ENCODE measurements at regions of chr3 and their contacts with region 1.

Region 1: GRCh38 chr3:44661189-44661588 is 12.7 kb downstream of the ZNF35 start:
- DNase-seq: no peak
- H3K4me3 ChIP-seq: no peak overlapping the region
- H3K27ac ChIP-seq: no peak overlapping the region
- H3K4me1 ChIP-seq: no peaks in the 10 kb centered on the region
- H3K27me3 ChIP-seq: no peaks in the 10 kb centered on the region
- CTCF ChIP-seq: peak in 1 of 2 donors; percentile 11

Region 2: GRCh38 chr3:44632193-44632592 is 29.0 kb before region 1 on chr3:
- CTCF ChIA-PET with region 1: no interaction called
- dilution Hi-C with region 1: no loop called
- in situ Hi-C with region 1: no loop called
- intact Hi-C with region 1: no loop called
- DNase-seq: no peak
- H3K4me3 ChIP-seq: no peak overlapping the region
- H3K27ac ChIP-seq: no peak overlapping the region
- H3K4me1 ChIP-seq: no peaks in the 10 kb centered on the region
- H3K27me3 ChIP-seq: no peaks in the 10 kb centered on the region
- CTCF ChIP-seq: no peak

Region 3: DNA sequence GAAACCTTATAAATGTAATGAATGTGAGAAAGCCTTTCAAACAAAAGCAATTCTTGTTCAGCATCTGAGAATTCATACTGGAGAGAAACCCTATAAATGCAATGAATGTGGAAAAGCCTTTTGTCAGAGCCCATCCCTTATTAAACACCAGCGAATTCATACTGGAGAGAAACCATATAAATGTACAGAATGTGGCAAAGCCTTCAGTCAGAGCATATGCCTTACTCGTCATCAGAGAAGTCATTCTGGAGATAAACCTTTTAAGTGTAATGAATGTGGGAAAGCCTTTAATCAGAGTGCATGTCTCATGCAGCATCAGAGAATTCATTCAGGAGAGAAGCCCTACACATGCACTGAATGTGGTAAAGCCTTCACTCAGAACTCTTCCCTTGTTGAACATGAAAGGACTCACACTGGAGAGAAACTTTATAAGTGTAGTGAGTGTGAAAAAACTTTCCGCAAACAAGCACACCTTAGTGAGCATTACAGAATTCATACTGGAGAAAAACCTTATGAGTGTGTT is 73.5 kb after region 1 on chr3:
- CTCF ChIA-PET with region 1: no interaction called
- dilution Hi-C with region 1: loop called (anchors 5 kb)
- in situ Hi-C with region 1: no loop called
- intact Hi-C with region 1: no loop called
- DNase-seq: no peak
- H3K4me3 ChIP-seq: no peak overlapping the region
- H3K27ac ChIP-seq: no peak overlapping the region
- H3K4me1 ChIP-seq: no peaks in the 10 kb centered on the region
- H3K27me3 ChIP-seq: no peaks in the 10 kb centered on the region
- CTCF ChIP-seq: no peak

Measured in mammary epithelial cell (primary cell).